ENCODE measurements at regions of chr4 and their contacts with region 1.

Region 1: GRCh38 chr4:172819353-172819752 is 349.3 kb upstream of the GALNT7 start:
- DNase-seq: no peak
- H3K4me3 ChIP-seq: no peak overlapping the region
- H3K4me3 Mint-ChIP-seq: no peak overlapping the region
- H3K27ac Mint-ChIP-seq: no peak overlapping the region
- H3K4me1 ChIP-seq: peaks cover 19% of the 10 kb centered on the region
- H3K4me1 Mint-ChIP-seq: peaks cover 16% of the 10 kb centered on the region
- H3K27me3 ChIP-seq: no peaks in the 10 kb centered on the region
- H3K27me3 Mint-ChIP-seq: no peaks in the 10 kb centered on the region
- CTCF ChIP-seq: no peak

Region 2: GRCh38 chr4:172596206-172596605 is 223.1 kb before region 1 on chr4:
- CTCF ChIA-PET with region 1: no interaction called
- POLR2A ChIA-PET with region 1: no interaction called
- intact Hi-C with region 1: loop called (anchors 5 kb)
- DNase-seq: peak in 1 of 2 experiments; percentile 5
- H3K4me3 ChIP-seq: no peak overlapping the region
- H3K4me3 Mint-ChIP-seq: no peak overlapping the region
- H3K27ac Mint-ChIP-seq: no peak overlapping the region
- H3K4me1 ChIP-seq: no peaks in the 10 kb centered on the region
- H3K4me1 Mint-ChIP-seq: no peaks in the 10 kb centered on the region
- H3K27me3 ChIP-seq: no peaks in the 10 kb centered on the region
- H3K27me3 Mint-ChIP-seq: no peaks in the 10 kb centered on the region
- CTCF ChIP-seq: peak in 1 of 2 experiments; percentile 21

Region 3: GRCh38 chr4:172726001-172726423 is 93.3 kb before region 1 on chr4:
- CTCF ChIA-PET with region 1: no interaction called
- POLR2A ChIA-PET with region 1: no interaction called
- intact Hi-C with region 1: loop called (anchors 1 kb)
- DNase-seq: peak; percentile 81 to 93
- H3K4me3 ChIP-seq: peak overlapping the region; percentile 8; the same call in 1 of the 2 replicates
- H3K4me3 Mint-ChIP-seq: peak overlapping the region; percentile 18
- H3K27ac Mint-ChIP-seq: peak overlapping the region; percentile 15
- H3K4me1 ChIP-seq: peaks cover 33% of the 10 kb centered on the region
- H3K4me1 Mint-ChIP-seq: peaks cover 24% of the 10 kb centered on the region
- H3K27me3 ChIP-seq: no peaks in the 10 kb centered on the region
- H3K27me3 Mint-ChIP-seq: no peaks in the 10 kb centered on the region
- CTCF ChIP-seq: no peak

Region 4: DNA sequence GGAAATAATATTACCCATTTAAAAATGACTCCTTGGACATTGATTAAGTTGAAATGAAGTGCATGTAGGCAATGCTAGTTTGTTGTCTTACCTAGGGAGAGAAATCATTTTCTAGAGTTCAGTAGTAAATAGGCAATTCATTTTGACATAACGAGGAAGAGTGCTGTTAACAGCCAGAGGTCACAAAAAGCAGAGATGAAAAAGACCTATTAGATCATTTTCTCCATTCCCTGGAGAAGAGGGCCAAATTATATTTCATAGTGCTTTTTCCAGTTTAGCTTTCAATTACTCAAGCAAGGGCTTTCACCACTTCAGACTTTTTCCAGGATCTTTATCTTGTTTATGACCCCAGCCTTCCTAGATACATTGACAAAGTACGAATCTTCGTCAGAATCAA is 25.0 kb before region 1 on chr4:
- CTCF ChIA-PET with region 1: no interaction called
- POLR2A ChIA-PET with region 1: no interaction called
- intact Hi-C with region 1: loop called (anchors 2 kb)
- DNase-seq: no peak
- H3K4me3 ChIP-seq: no peak overlapping the region
- H3K4me3 Mint-ChIP-seq: no peak overlapping the region
- H3K27ac Mint-ChIP-seq: peak overlapping the region; percentile 49
- H3K4me1 ChIP-seq: peaks cover 17% of the 10 kb centered on the region
- H3K4me1 Mint-ChIP-seq: peaks cover 26% of the 10 kb centered on the region
- H3K27me3 ChIP-seq: no peaks in the 10 kb centered on the region
- H3K27me3 Mint-ChIP-seq: no peaks in the 10 kb centered on the region
- CTCF ChIP-seq: no peak